HepG2 (cell line): ENCODE measurements at regions of chr6 and their contacts with region 1.

Region 1: GRCh38 chr6:146985111-146985510 is 219.1 kb upstream of the STXBP5 start:
- DNase-seq: peak; percentile 97
- ATAC-seq: peak; percentile 82
- H3K4me3 ChIP-seq: peak overlapping the region; percentile 25 to 66 (median 49); a peak in 4 of 6 replicates
- H3K27ac ChIP-seq: peak overlapping the region; percentile 73
- H3K4me1 ChIP-seq: peaks cover 74% of the 10 kb centered on the region
- H3K27me3 ChIP-seq: no peaks in the 10 kb centered on the region
- CTCF ChIP-seq: no peak
- EP300 ChIP-seq: peak; percentile 76 to 93; a peak in 3 of 4 replicates
- POLR2A ChIP-seq: no peak
- RAD21 ChIP-seq: no peak

Region 2: GRCh38 chr6:146829792-146830565 is 155.1 kb before region 1 on chr6:
- CTCF ChIA-PET with region 1: no interaction called
- POLR2A ChIA-PET with region 1: no interaction called
- in situ Hi-C with region 1: no loop called
- intact Hi-C with region 1: no loop called
- DNase-seq: no peak
- ATAC-seq: no peak
- H3K4me3 ChIP-seq: no peak overlapping the region
- H3K27ac ChIP-seq: no peak overlapping the region
- H3K4me1 ChIP-seq: no peaks in the 10 kb centered on the region
- H3K27me3 ChIP-seq: no peaks in the 10 kb centered on the region
- CTCF ChIP-seq: no peak
- EP300 ChIP-seq: no peak
- POLR2A ChIP-seq: no peak
- RAD21 ChIP-seq: no peak

Region 3: GRCh38 chr6:146950351-146950835 is 34.7 kb before region 1 on chr6:
- CTCF ChIA-PET with region 1: no interaction called
- POLR2A ChIA-PET with region 1: no interaction called
- in situ Hi-C with region 1: no loop called
- intact Hi-C with region 1: loop called (anchors 2 kb)
- DNase-seq: peak; percentile 69
- ATAC-seq: peak; percentile 96
- H3K4me3 ChIP-seq: peak overlapping the region in 1 of 3 experiments; percentile 15; a peak in 2 of 6 replicates
- H3K27ac ChIP-seq: no peak overlapping the region
- H3K4me1 ChIP-seq: peaks cover 28% of the 10 kb centered on the region
- H3K27me3 ChIP-seq: no peaks in the 10 kb centered on the region
- CTCF ChIP-seq: no peak
- EP300 ChIP-seq: peak in 1 of 2 experiments; percentile 69; a peak in 2 of 4 replicates
- POLR2A ChIP-seq: no peak
- RAD21 ChIP-seq: no peak

Region 4: DNA sequence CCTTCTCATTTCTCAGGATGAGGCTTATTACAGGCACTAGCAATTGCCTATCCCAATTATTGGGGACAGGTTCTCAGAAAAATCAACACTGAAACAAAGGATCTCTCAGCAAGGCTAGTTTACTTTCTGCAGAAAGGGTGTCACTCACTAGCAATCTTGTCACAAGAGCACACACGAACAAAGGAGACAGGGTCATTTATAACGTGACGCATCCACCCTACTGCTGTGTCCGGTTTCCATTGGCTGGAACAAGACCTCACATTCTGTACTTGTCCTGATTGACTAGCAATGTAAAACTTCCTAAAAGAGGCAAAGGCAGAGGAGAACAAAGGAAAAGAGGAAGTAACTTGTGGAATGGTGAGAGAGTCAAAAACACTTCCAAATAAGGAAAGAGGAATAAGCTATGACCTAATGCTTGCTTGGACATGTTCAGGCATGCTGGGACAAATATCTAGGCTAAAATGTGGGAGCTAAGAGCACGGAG is 58.9 kb after region 1 on chr6:
- CTCF ChIA-PET with region 1: no interaction called
- POLR2A ChIA-PET with region 1: no interaction called
- in situ Hi-C with region 1: no loop called
- intact Hi-C with region 1: no loop called
- DNase-seq: no peak
- ATAC-seq: peak; percentile 55
- H3K4me3 ChIP-seq: no peak overlapping the region
- H3K27ac ChIP-seq: no peak overlapping the region
- H3K4me1 ChIP-seq: peaks cover 7% of the 10 kb centered on the region; the same call in 1 of the 2 replicates
- H3K27me3 ChIP-seq: no peaks in the 10 kb centered on the region; a peak in 1 of 5 replicates
- CTCF ChIP-seq: no peak
- EP300 ChIP-seq: no peak
- POLR2A ChIP-seq: no peak
- RAD21 ChIP-seq: no peak

Region 5: GRCh38 chr6:147063469-147064031 is 78.4 kb after region 1 on chr6:
- CTCF ChIA-PET with region 1: no interaction called
- POLR2A ChIA-PET with region 1: no interaction called
- in situ Hi-C with region 1: no loop called
- intact Hi-C with region 1: loop called (anchors 2 kb)
- DNase-seq: peak; percentile 70
- ATAC-seq: peak; percentile 62
- H3K4me3 ChIP-seq: no peak overlapping the region
- H3K27ac ChIP-seq: no peak overlapping the region
- H3K4me1 ChIP-seq: peaks cover 40% of the 10 kb centered on the region
- H3K27me3 ChIP-seq: no peaks in the 10 kb centered on the region
- CTCF ChIP-seq: no peak
- EP300 ChIP-seq: no peak
- POLR2A ChIP-seq: no peak
- RAD21 ChIP-seq: no peak